A673 (cell line): ENCODE measurements at regions of chr17 and their contacts with region 1.

Region 1: GRCh38 chr17:2054512-2055291 is at the start of gene HIC1:
- DNase-seq: peak; percentile 81
- H3K4me3 ChIP-seq: peak within 1 kb of the TSS; percentile 58
- H3K27ac ChIP-seq: no peak within 1 kb of the TSS
- H3K4me1 ChIP-seq: peaks cover 17% of the 10 kb centered on the region
- H3K27me3 ChIP-seq: no peaks in the 10 kb centered on the region
- CTCF ChIP-seq: peak; percentile 69
- total RNA-seq, gene HIC1: 0.84 and 1.5 TPM in 2 replicates

Region 2: DNA sequence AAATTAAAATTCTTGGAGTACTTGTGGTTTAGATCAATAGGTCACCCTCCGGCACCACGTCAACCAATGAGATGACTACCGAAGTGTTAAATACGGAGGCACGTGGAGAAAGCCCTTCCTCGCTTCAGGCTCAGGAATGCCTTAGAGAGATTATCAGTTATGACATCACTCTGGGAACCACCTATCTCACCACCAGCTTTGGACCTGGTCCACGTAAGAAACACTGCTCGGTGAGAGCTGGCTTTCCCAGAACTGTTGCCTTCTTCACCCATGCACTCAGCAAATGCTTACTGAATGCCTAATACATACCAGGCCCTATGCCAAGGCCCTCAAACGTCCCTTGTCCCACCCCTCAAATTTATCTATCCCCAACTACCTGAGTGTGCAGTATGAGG is 177.5 kb after region 1 on chr17:
- CTCF ChIA-PET with region 1: interaction called, 13 read pairs
- POLR2A ChIA-PET with region 1: no interaction called
- intact Hi-C with region 1: no loop called
- DNase-seq: no peak
- H3K4me3 ChIP-seq: no peak overlapping the region
- H3K27ac ChIP-seq: peak overlapping the region; percentile 21
- H3K4me1 ChIP-seq: peaks cover 17% of the 10 kb centered on the region
- H3K27me3 ChIP-seq: no peaks in the 10 kb centered on the region
- CTCF ChIP-seq: no peak